Testis (tissue), 5 donors: ENCODE measurements at regions of chr4 and their contacts with region 1.

Region 1: GRCh38 chr4:153344131-153345010 is at the start of gene MND1:
- DNase-seq: peak; percentile 90
- H3K4me3 ChIP-seq: peak within 1 kb of the TSS; percentile 77 to 79
- H3K27ac ChIP-seq: peak within 1 kb of the TSS; percentile 41 to 80
- H3K4me1 ChIP-seq: no peaks in the 10 kb centered on the region
- H3K27me3 ChIP-seq: no peaks in the 10 kb centered on the region
- CTCF ChIP-seq: peak; percentile 61 to 91 (median 67)
- POLR2A ChIP-seq: no peak
- total RNA-seq, gene MND1: 8.3 to 11.4 TPM

Region 2: DNA sequence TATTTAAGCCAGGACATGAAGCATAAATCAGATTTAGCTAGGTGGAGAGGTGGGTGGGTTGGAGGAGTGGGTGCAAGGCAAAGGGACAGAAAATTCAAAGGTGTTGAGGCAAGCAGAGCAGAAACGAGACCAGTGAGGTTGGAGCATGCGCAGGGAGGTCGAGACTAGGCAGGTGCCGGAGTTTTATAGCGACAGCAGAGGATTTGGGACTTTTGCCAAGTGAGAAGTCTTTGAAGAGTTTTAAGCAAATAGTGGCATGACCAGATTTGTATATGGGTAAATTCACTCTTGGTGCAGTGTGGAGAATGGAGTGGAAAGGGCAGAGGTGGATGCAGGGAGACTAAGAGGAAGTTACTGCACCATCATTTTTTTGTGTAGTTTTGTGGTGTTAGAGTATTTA is 232.7 kb after region 1 on chr4:
- intact Hi-C with region 1: loop called (anchors 5 kb)
- DNase-seq: no peak
- H3K4me3 ChIP-seq: no peak overlapping the region
- H3K27ac ChIP-seq: no peak overlapping the region
- H3K4me1 ChIP-seq: no peaks in the 10 kb centered on the region
- H3K27me3 ChIP-seq: no peaks in the 10 kb centered on the region
- CTCF ChIP-seq: no peak
- POLR2A ChIP-seq: no peak